CD8-positive, alpha-beta T cell (primary cell): ENCODE measurements at regions of chr9 and their contacts with region 1.

Region 1: GRCh38 chr9:78664370-78664769 is 367.4 kb downstream of the PSAT1 start:
- DNase-seq: no peak
- ATAC-seq: no peak
- H3K4me3 ChIP-seq: no peak overlapping the region
- H3K4me3 Mint-ChIP-seq: no peak overlapping the region
- H3K27ac ChIP-seq: no peak overlapping the region
- H3K27ac Mint-ChIP-seq: no peak overlapping the region
- H3K4me1 ChIP-seq: no peaks in the 10 kb centered on the region
- H3K4me1 Mint-ChIP-seq: no peaks in the 10 kb centered on the region
- H3K27me3 ChIP-seq: no peaks in the 10 kb centered on the region
- H3K27me3 Mint-ChIP-seq: peaks cover 6% of the 10 kb centered on the region
- CTCF ChIP-seq: no peak

Region 2: DNA sequence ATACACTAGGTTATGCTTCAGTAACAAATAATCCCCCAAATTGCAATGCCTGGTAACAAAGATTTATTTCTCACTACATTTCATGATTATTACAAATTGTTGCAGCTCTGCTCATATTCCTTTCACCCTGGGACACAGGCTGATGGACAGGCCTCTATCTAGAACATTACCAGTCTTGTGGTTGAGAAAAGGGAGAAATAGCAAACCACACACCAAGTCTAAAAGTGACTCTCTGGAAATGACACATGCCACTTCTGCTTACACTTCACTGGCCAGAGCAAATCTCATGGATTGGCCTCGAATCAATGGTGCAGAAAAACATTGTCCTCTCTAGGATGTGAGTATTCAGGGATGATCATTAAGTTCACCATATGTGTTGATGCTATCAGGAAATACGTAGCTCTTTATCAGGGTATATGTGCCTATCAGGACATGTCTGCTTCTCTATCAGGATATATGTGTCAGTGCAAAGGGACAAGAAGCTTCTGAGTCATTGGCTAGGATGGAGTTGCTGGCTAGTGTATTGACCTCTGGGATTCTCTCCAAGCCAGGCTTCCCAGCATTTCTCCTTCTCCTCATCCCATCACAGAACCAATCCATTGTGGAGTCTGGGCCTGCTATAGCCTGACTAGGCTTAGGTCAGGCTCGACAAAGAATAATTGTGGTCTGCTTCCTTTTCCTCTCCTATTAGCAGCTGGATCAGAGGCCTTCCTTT is 519.5 kb before region 1 on chr9:
- CTCF ChIA-PET with region 1: no interaction called
- POLR2A ChIA-PET with region 1: no interaction called
- intact Hi-C with region 1: no loop called
- DNase-seq: no peak
- ATAC-seq: no peak
- H3K4me3 ChIP-seq: no peak overlapping the region
- H3K4me3 Mint-ChIP-seq: no peak overlapping the region
- H3K27ac ChIP-seq: no peak overlapping the region
- H3K27ac Mint-ChIP-seq: no peak overlapping the region
- H3K4me1 ChIP-seq: no peaks in the 10 kb centered on the region
- H3K4me1 Mint-ChIP-seq: peaks cover 2% of the 10 kb centered on the region
- H3K27me3 ChIP-seq: no peaks in the 10 kb centered on the region
- H3K27me3 Mint-ChIP-seq: no peaks in the 10 kb centered on the region
- CTCF ChIP-seq: no peak

Region 3: GRCh38 chr9:78678877-78679276 is 14.5 kb after region 1 on chr9:
- CTCF ChIA-PET with region 1: interaction called, 3 read pairs
- POLR2A ChIA-PET with region 1: interaction called, 3 read pairs
- intact Hi-C with region 1: loop called in 1 of 2 experiments (anchors 2 kb)
- DNase-seq: no peak
- ATAC-seq: no peak
- H3K4me3 ChIP-seq: no peak overlapping the region
- H3K4me3 Mint-ChIP-seq: no peak overlapping the region
- H3K27ac ChIP-seq: no peak overlapping the region
- H3K27ac Mint-ChIP-seq: no peak overlapping the region
- H3K4me1 ChIP-seq: no peaks in the 10 kb centered on the region
- H3K4me1 Mint-ChIP-seq: no peaks in the 10 kb centered on the region
- H3K27me3 ChIP-seq: no peaks in the 10 kb centered on the region
- H3K27me3 Mint-ChIP-seq: no peaks in the 10 kb centered on the region
- CTCF ChIP-seq: no peak

Region 4: GRCh38 chr9:78958892-78959291 is 294.5 kb after region 1 on chr9:
- CTCF ChIA-PET with region 1: no interaction called
- POLR2A ChIA-PET with region 1: no interaction called
- intact Hi-C with region 1: no loop called
- DNase-seq: no peak
- ATAC-seq: no peak
- H3K4me3 ChIP-seq: no peak overlapping the region
- H3K4me3 Mint-ChIP-seq: no peak overlapping the region
- H3K27ac ChIP-seq: no peak overlapping the region
- H3K27ac Mint-ChIP-seq: no peak overlapping the region
- H3K4me1 ChIP-seq: no peaks in the 10 kb centered on the region
- H3K4me1 Mint-ChIP-seq: no peaks in the 10 kb centered on the region
- H3K27me3 ChIP-seq: no peaks in the 10 kb centered on the region
- H3K27me3 Mint-ChIP-seq: no peaks in the 10 kb centered on the region
- CTCF ChIP-seq: no peak